Vagina (tissue), 2 donors: ENCODE measurements at regions of chr20 and their contacts with region 1.

Region 1: DNA sequence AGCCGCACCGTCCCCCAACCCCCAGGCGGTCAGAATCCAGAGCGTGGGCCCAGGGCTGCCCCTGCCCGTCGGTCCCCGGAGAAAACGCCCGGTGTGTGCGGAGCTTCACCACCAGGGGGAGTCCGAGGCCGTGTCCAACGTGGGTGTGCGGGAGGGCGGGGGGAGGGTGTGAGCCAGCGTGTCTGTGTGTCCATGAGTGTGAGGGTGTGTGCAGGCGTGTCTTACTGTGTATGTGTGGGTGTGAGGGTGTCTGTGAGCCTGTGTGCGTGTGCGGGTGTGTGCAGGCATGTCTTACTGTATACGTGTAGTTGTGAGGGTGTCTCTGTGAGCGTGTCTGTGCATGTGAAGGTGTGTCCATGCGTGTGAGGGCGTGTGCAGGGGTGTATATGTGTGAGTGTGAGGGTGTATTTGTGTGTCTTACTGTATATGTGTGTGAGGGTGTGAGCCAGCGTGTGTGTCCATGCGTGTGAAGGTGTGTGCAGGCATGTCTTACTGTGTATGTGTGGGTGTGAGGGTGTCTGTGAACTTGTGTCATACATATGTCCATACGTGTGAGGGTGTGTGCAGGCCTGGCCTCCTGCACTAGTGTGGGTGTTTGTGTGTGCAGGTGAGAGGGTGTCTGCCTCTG is 24.6 kb upstream of the GATA5 start:
- DNase-seq: no peak
- H3K4me3 ChIP-seq: no peak overlapping the region
- H3K27ac ChIP-seq: no peak overlapping the region
- H3K4me1 ChIP-seq: no peaks in the 10 kb centered on the region
- H3K27me3 ChIP-seq: no peaks in the 10 kb centered on the region
- CTCF ChIP-seq: peak; percentile 78 to 93 (median 80)
- POLR2A ChIP-seq: no peak

Region 2: GRCh38 chr20:62536871-62537401 is 36.6 kb after region 1 on chr20:
- intact Hi-C with region 1: no loop called
- DNase-seq: no peak
- H3K4me3 ChIP-seq: no peak overlapping the region
- H3K27ac ChIP-seq: no peak overlapping the region
- H3K4me1 ChIP-seq: peaks cover 19% of the 10 kb centered on the region
- H3K27me3 ChIP-seq: no peaks in the 10 kb centered on the region
- CTCF ChIP-seq: no peak
- POLR2A ChIP-seq: no peak

Region 3: GRCh38 chr20:62561948-62562347 is 61.6 kb after region 1 on chr20:
- intact Hi-C with region 1: loop called (anchors 2 kb)
- DNase-seq: no peak
- H3K4me3 ChIP-seq: no peak overlapping the region
- H3K27ac ChIP-seq: no peak overlapping the region
- H3K4me1 ChIP-seq: no peaks in the 10 kb centered on the region
- H3K27me3 ChIP-seq: no peaks in the 10 kb centered on the region
- CTCF ChIP-seq: no peak
- POLR2A ChIP-seq: no peak

Region 4: DNA sequence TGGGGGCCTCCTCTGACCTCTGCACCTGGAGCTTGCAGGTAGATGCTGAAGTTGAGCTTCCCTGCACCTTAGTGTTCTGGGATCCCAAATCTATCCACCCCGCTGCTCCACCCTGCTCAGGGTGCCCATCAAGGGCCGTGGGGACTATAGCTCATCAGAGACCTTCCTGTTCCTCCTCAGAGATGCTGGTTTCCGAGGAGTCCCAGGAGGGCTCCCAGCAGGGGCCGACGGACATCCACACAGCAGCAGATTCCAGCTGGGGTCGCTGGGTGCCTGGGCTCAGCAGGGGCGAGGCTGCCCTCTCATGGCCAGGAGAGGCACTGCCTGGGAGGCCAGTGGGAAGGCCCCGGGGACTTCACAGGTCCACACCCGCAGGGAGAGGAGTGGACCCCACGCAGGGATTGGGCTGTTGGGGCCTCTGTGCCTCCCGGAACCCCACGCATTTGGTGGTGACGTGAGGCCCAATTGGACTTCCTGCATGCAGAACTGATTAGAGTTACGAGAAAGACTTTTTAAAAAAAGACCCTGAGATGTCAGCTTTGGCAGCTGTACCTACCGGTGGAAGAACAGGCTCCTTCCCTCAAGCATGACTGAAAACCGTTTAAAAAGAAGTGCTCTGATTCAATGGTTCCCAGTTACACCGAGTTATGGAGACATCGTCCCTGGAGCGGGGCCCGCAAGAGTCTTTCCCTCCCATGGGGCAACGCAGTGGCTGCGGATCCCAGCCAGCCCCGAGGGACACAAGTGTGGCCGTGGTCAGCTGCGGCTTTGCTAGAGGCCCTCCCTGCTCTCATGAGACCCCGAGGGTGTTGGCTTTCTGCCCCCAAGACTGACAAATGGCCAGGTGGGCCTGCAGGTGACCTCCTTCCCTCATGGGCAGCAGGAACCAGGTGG is 116.6 kb after region 1 on chr20:
- intact Hi-C with region 1: loop called (anchors 5 kb)
- DNase-seq: no peak
- H3K4me3 ChIP-seq: no peak overlapping the region
- H3K27ac ChIP-seq: peak overlapping the region; percentile 22
- H3K4me1 ChIP-seq: peaks cover 27% of the 10 kb centered on the region
- H3K27me3 ChIP-seq: no peaks in the 10 kb centered on the region
- CTCF ChIP-seq: peak; percentile 71 to 80 (median 78)
- POLR2A ChIP-seq: no peak

Region 5: DNA sequence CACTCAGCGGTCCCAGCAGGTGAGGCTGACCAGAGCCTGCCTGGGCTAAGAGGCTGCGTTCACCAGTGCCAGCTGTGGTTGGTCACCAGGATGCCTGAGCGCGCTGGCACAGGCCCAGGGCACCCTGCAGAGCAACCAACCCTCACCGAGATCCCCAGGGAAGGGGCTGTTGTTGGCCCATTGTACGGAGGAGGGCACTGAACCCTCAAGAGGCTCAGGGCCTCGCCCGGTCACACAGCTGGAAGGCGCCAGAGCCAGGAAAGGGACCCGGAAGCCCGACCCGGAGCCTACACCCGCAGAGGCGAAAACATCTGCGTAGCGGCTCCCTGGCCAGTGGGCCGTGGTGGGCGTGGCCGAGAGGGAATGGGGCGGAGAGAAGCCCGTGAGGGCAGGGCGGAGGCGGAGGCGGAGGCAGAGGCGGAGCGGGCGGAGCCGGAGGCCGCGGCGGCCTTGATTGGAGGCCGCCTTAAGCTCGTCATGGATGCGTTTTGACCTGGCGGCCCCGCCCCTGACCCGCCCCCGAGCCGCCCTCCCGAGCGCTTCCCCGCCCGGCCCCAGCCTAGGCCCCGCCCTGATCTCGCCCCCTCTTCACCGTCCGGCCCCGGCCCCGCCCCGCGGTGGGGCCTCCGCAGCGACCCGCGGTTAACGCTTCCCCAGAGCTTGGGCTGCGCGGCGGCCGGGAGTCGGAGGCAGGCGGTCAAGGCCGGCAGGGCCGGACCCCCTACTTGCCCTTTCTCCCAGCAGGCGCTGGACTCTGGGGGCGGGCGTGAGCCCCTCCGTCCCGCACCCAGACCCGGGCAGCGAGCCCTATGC is 293.8 kb after region 1 on chr20:
- intact Hi-C with region 1: loop called (anchors 5 kb)
- DNase-seq: peak in 1 of 2 donors; percentile 95
- H3K4me3 ChIP-seq: peak overlapping the region; percentile 66 to 81
- H3K27ac ChIP-seq: peak overlapping the region; percentile 88
- H3K4me1 ChIP-seq: peaks cover 26% of the 10 kb centered on the region
- H3K27me3 ChIP-seq: no peaks in the 10 kb centered on the region
- CTCF ChIP-seq: no peak
- POLR2A ChIP-seq: peak in 1 of 2 donors; percentile 92